ENCODE measurements at regions of chr3 and their contacts with region 1.

Region 1: GRCh38 chr3:72310419-72311380 is 525.8 kb upstream of the PROK2 start:
- DNase-seq: peak; percentile 79
- H3K4me3 ChIP-seq: peak overlapping the region; percentile 28
- H3K27ac ChIP-seq: peak overlapping the region; percentile 73
- H3K4me1 ChIP-seq: peaks cover 26% of the 10 kb centered on the region
- CTCF ChIP-seq: no peak

Region 2: GRCh38 chr3:72177083-72178050 is 133.3 kb before region 1 on chr3:
- CTCF ChIA-PET with region 1: no interaction called
- POLR2A ChIA-PET with region 1: no interaction called
- intact Hi-C with region 1: loop called (anchors 1 kb)
- DNase-seq: peak; percentile 64
- H3K4me3 ChIP-seq: peak overlapping the region; percentile 33
- H3K27ac ChIP-seq: peak overlapping the region; percentile 51
- H3K4me1 ChIP-seq: peaks cover 39% of the 10 kb centered on the region
- CTCF ChIP-seq: no peak

Region 3: DNA sequence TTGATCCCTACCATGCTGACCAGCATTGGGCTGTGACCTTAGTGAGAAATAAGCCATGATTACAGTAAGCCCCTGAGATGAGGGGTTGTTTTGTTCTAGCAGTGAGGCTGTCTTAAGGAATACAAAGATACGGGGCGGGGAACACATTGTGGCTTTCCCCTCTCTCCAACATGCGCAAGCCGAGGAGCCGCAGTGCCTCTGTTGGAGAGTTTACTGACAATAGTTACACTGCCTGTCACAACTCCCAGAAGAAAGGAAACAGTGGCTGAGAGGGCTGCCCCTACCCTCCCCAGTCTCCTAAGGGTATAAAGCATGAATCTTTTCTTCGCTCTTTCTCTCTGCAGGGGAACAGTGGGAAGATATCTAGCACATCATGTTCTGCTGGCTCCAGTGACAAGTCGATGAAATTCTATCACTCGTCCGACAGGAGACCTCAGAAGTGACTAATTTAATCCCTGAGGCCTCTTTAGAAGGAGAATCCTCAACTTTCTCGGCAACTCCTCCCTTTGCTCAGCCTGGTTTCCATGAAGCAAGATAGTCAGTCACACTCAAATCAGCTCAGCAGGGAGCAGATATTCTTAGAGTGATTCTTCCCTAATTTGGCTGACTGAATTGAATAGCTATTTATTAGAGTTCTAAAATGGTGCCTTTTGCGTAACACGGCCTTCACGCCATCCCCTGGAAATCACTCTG is 116.8 kb before region 1 on chr3:
- CTCF ChIA-PET with region 1: no interaction called
- POLR2A ChIA-PET with region 1: no interaction called
- intact Hi-C with region 1: no loop called
- DNase-seq: no peak
- H3K4me3 ChIP-seq: no peak overlapping the region
- H3K27ac ChIP-seq: no peak overlapping the region
- H3K4me1 ChIP-seq: no peaks in the 10 kb centered on the region
- CTCF ChIP-seq: no peak

Region 4: GRCh38 chr3:72295276-72295961 is 15.3 kb before region 1 on chr3:
- CTCF ChIA-PET with region 1: no interaction called
- POLR2A ChIA-PET with region 1: interaction called, 13 read pairs
- intact Hi-C with region 1: no loop called
- DNase-seq: no peak
- H3K4me3 ChIP-seq: no peak overlapping the region
- H3K27ac ChIP-seq: no peak overlapping the region
- H3K4me1 ChIP-seq: no peaks in the 10 kb centered on the region
- CTCF ChIP-seq: no peak

Region 5: DNA sequence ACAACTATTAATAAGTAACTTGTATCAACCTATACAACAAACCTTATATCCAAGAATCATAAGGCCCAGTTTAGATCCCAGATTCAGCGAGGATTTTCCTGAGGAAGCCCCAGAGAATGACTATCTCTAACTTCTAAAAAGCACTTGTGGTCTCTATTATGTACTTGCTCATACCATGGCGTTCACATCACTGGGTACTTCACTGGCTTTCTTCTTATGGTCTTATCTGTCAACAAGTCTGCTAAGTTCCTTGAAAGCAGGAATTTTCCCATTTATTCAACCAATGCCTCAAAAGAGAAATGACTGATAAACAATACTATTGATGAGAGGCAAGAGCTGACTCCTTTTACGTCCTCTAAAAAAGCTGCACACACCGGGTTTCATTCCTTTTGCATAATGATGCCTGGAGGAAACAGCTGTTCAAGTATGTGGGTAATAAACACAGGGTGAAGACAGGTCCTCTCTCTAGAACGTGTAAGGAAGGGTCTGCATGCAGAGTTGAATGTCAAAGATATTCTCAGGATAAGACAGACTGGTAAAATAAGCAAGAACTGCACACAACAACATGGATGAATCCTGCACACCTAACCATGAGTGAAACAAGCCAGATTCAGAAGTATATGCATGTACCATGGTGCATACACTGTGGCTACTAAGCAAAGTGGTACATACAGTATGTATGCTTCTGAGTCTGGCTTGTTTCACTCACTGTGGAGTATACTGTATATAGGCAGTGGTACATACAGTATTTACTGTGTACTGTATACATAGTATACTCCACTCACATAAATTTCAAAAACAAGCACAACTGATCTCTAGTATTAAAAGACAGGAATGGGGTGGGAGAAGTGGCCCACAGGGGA is 128.9 kb after region 1 on chr3:
- CTCF ChIA-PET with region 1: no interaction called
- POLR2A ChIA-PET with region 1: no interaction called
- intact Hi-C with region 1: loop called (anchors 5 kb)
- DNase-seq: peak; percentile 37
- H3K4me3 ChIP-seq: peak overlapping the region; percentile 43
- H3K27ac ChIP-seq: peak overlapping the region; percentile 31
- H3K4me1 ChIP-seq: peaks cover 58% of the 10 kb centered on the region
- CTCF ChIP-seq: no peak

Measured in OCI-LY7 (cell line).